Activated CD8-positive, alpha-beta T cell treated with anti-CD3 and anti-CD28 coated beads for 36 hours (primary cell): ENCODE measurements at regions of chr3 and their contacts with region 1.

Region 1: GRCh38 chr3:32238453-32239306 is at the start of gene CMTM8:
- DNase-seq: peak; percentile 59
- ATAC-seq: peak; percentile 85
- H3K4me3 Mint-ChIP-seq: peak within 1 kb of the TSS; percentile 79
- H3K27ac Mint-ChIP-seq: no peak within 1 kb of the TSS
- H3K4me1 Mint-ChIP-seq: peaks cover 20% of the 10 kb centered on the region
- H3K27me3 Mint-ChIP-seq: peaks cover 18% of the 10 kb centered on the region
- CTCF ChIP-seq: no peak
- total RNA-seq, gene CMTM8: 6.4 to 6.9 TPM

Region 2: GRCh38 chr3:32226870-32227500 is 11.7 kb before region 1 on chr3:
- CTCF ChIA-PET with region 1: interaction called, 40 read pairs
- POLR2A ChIA-PET with region 1: no interaction called
- intact Hi-C with region 1: no loop called
- DNase-seq: no peak
- ATAC-seq: no peak
- H3K4me3 Mint-ChIP-seq: no peak overlapping the region
- H3K27ac Mint-ChIP-seq: no peak overlapping the region
- H3K4me1 Mint-ChIP-seq: no peaks in the 10 kb centered on the region
- H3K27me3 Mint-ChIP-seq: peaks cover 5% of the 10 kb centered on the region
- CTCF ChIP-seq: no peak

Region 3: DNA sequence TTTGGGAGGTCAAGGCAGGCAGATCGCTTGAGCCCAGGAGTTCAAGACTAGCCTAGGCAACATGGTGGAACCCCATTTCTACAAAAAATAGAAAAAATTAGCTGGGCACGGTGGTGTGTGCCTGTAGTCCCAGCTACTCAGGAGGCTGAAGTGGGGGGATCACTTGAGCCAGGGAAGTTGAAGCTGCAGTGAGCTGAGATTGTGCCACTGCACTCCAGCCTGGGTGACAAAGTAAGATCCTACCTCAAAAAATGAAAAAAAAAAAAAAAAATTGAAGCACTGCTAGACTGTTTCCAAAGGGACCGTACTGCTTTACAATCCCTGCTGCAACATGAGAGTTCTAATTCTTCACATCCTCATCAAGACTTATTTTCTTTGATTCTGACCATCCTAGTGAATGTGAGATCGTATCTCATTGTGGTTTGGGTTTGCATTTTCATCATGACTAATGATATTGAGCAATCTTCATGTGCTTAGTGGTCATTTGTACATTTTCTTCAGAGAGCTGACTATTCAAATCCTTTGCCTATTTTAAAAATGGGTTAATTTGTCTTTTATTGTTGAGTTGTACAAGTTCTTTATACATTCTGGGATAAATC is 10.6 kb after region 1 on chr3:
- CTCF ChIA-PET with region 1: interaction called, 29 read pairs
- POLR2A ChIA-PET with region 1: interaction called, 3 read pairs
- intact Hi-C with region 1: no loop called
- DNase-seq: no peak
- ATAC-seq: no peak
- H3K4me3 Mint-ChIP-seq: no peak overlapping the region
- H3K27ac Mint-ChIP-seq: no peak overlapping the region
- H3K4me1 Mint-ChIP-seq: peaks cover 16% of the 10 kb centered on the region
- H3K27me3 Mint-ChIP-seq: no peaks in the 10 kb centered on the region
- CTCF ChIP-seq: no peak

Region 4: GRCh38 chr3:32257042-32257441 is 18.4 kb after region 1 on chr3:
- CTCF ChIA-PET with region 1: interaction called, 29 read pairs
- POLR2A ChIA-PET with region 1: interaction called, 3 read pairs
- intact Hi-C with region 1: no loop called
- DNase-seq: no peak
- ATAC-seq: no peak
- H3K4me3 Mint-ChIP-seq: no peak overlapping the region
- H3K27ac Mint-ChIP-seq: no peak overlapping the region
- H3K4me1 Mint-ChIP-seq: peaks cover 5% of the 10 kb centered on the region
- H3K27me3 Mint-ChIP-seq: peaks cover 1% of the 10 kb centered on the region
- CTCF ChIP-seq: no peak

Region 5: DNA sequence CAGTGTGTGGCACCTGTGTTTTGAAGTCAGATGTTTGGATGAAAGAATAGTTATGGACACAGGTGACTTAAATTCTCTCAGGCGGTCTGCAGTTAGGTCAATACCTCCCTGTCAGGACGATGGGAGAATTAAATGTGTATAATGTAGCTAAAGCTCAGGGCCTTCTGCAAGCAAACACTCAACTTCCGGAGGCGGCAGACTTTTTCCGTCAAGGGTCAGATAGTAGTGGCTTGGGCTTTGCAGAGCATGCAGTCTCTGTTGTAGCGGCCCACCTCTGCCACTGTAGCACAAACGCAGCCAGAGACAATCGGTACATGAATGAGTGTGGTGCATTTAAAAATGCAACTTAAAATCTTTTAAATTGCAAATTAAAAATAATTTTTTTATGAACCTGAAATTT is 47.2 kb after region 1 on chr3:
- CTCF ChIA-PET with region 1: interaction called, 11 read pairs
- POLR2A ChIA-PET with region 1: no interaction called
- intact Hi-C with region 1: no loop called
- DNase-seq: no peak
- ATAC-seq: no peak
- H3K4me3 Mint-ChIP-seq: no peak overlapping the region
- H3K27ac Mint-ChIP-seq: no peak overlapping the region
- H3K4me1 Mint-ChIP-seq: peaks cover 7% of the 10 kb centered on the region
- H3K27me3 Mint-ChIP-seq: no peaks in the 10 kb centered on the region
- CTCF ChIP-seq: no peak